Activated CD4-positive, alpha-beta memory T cell treated with anti-CD3 and anti-CD28 coated beads for 36 hours (primary cell): ENCODE measurements at regions of chr17 and their contacts with region 1.

Region 1: DNA sequence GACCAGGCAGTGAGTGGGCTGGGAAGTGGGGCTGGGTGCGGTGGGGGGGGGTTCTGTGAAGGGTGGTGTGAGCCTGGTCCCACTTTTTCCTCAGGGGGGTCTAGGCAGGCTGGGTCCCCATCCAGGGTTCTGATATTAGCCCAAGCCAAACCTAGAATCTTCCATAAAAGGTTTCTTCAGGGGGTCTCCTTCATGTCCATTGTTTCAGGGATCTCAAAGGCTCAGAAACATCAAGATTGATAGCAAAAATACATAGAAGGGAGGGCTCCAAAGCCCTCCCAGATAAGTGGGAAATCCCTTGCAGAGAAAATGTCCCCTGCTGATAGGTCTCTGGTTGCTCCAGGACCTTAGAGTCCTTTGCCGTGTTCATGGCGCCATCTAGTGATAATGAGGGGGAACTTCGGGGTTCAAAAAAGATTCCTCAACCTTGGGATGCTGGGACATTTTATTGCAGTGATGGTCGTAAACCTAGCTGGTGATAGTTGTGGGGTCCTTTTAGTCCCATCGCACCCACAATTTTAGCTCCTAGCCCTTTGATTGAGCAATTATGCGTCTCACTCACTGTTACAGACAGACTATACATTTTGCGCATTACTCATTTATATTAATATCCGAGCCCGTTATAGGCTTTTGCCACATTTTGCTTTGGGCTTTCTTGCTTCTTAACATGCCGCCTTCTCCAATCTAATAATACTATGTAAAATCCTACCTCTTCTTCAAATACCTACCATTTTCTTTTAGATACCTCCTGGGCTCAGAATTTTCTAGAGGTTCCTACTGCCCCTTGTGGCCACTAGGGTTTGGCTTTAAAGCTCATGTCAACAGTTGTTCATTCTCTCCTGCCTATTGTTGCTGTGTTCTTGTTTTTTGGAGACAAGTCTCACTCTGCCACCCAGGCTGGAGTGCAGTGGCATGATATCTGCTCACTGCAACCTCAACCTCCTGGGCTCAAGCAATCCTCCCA is 35.1 kb downstream of the IGF2BP1 start:
- DNase-seq: peak; percentile 55
- H3K4me3 Mint-ChIP-seq: no peak overlapping the region
- H3K27ac Mint-ChIP-seq: no peak overlapping the region
- H3K4me1 Mint-ChIP-seq: no peaks in the 10 kb centered on the region
- H3K27me3 Mint-ChIP-seq: peaks cover 3% of the 10 kb centered on the region

Region 2: DNA sequence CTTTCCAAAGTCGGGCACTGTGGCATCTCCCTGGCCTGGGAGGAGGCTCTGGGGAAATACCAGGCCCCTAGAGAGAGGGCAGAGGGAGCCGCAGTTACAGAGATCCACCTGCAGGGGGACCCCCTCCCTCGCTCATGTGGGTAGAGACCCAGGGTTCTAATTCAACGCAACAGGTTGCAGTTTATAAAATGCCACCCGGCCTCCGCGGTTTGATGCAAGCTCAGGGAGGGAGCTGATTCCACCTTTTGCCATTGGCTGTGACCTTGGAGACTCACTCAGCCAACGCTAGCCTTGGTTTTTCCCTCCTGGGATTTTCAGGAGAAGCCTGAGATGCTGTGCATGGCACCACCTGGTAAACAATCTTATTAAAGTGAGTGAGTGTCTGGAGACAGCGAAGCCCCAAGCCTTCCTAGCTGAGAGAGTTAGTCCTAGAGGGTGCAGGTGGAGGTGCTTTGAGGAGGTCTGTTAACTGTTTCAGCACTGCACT is 227.3 kb before region 1 on chr17:
- CTCF ChIA-PET with region 1: interaction called, 20 read pairs
- POLR2A ChIA-PET with region 1: no interaction called
- intact Hi-C with region 1: loop called (anchors 1 kb)
- DNase-seq: peak; percentile 76
- H3K4me3 Mint-ChIP-seq: no peak overlapping the region
- H3K27ac Mint-ChIP-seq: no peak overlapping the region
- H3K4me1 Mint-ChIP-seq: no peaks in the 10 kb centered on the region
- H3K27me3 Mint-ChIP-seq: peaks cover 11% of the 10 kb centered on the region

Region 3: DNA sequence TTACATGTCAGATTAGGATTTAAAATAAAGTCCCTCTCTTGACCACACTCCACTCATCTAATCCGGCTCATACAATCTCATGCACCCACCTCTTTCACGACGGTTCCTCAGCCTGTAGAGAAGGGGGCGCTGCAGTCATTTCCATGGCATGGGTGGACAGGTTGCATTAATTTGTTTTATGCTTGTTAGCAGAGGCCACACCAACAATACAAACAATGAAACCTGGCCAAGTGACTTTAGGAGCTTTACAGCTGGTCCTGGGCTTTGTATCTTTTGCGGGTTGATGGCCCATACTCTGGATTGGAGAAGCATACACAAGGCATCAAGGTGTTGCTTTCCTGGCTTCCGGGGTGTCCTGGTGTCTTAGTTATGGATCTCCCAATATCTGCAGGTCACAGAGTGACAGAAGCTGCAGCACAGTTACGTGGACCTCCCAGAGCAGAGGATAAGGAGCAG is 77.9 kb before region 1 on chr17:
- CTCF ChIA-PET with region 1: interaction called, 5 read pairs
- POLR2A ChIA-PET with region 1: no interaction called
- intact Hi-C with region 1: loop called (anchors 5 kb)
- DNase-seq: peak; percentile 30
- H3K4me3 Mint-ChIP-seq: no peak overlapping the region
- H3K27ac Mint-ChIP-seq: no peak overlapping the region
- H3K4me1 Mint-ChIP-seq: peaks cover 3% of the 10 kb centered on the region
- H3K27me3 Mint-ChIP-seq: peaks cover 17% of the 10 kb centered on the region

Region 4: GRCh38 chr17:49101054-49101947 is 69.1 kb after region 1 on chr17:
- CTCF ChIA-PET with region 1: interaction called, 10 read pairs
- POLR2A ChIA-PET with region 1: no interaction called
- intact Hi-C with region 1: no loop called
- DNase-seq: no peak
- H3K4me3 Mint-ChIP-seq: no peak overlapping the region
- H3K27ac Mint-ChIP-seq: no peak overlapping the region
- H3K4me1 Mint-ChIP-seq: no peaks in the 10 kb centered on the region
- H3K27me3 Mint-ChIP-seq: no peaks in the 10 kb centered on the region